Naive thymus-derived CD4-positive, alpha-beta T cell (primary cell): ENCODE measurements at regions of chr12 and their contacts with region 1.

Region 1: DNA sequence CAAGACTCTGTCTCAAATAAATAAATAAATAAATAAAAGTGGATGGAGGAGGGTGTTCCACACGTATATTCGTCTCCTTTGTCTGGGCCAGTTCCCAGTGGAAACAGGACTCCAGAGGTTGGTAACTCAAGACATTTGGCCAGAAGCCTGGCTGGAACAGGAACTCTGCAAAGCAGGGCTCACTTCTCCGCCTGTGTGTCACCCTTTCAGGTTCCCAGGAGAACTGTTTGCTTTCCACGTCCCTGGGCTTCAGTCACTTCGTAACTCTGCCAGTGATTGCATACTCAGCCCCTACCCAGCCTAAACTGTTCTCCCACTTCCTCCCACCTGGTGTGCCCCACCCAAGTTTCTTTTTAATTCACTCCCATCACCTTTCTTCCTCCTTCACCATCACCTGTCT is 7.0 kb upstream of the UBE2N start:
- DNase-seq: no peak
- ATAC-seq: no peak
- H3K4me3 ChIP-seq: no peak overlapping the region
- H3K4me3 Mint-ChIP-seq: peak overlapping the region in 9 of 10 donors; percentile 3 to 82 (median 52)
- H3K27ac ChIP-seq: peak overlapping the region; percentile 65
- H3K27ac Mint-ChIP-seq: peak overlapping the region in 8 of 9 donors; percentile 92 to 100 (median 97)
- H3K4me1 ChIP-seq: peaks cover 0 to 29% of the 10 kb centered on the region in 2 donors
- H3K4me1 Mint-ChIP-seq: peaks cover 14 to 32% (median 28%) of the 10 kb centered on the region in 7 donors
- H3K27me3 ChIP-seq: no peaks in the 10 kb centered on the region
- H3K27me3 Mint-ChIP-seq: no peaks in the 10 kb centered on the region

Region 2: DNA sequence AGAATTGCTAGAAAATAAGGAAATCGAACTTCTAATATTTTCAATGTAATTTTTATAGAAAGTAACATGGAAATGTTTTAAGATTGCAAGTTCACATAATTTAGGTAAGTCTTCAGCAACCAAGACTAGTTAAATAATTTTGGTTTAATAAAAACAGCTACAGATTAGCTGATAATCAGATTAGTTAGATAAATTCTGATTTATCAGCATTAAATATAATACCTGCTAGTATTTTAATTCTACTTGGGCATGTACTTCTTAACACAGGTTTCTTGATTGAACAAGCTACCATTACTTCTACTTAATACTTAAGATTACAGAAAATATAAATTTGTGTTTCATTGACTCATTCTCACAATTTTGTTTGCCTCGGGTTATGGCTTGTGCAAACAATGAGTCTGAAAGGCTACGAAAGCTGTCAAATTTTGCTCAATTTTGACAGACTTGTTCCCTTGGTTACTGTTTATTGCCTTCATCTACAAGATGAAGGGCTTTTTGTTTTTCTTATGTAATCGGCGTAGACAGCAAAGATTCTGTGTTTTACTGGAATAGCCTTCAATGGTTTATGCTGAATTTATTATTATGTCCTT is 187.2 kb before region 1 on chr12:
- CTCF ChIA-PET with region 1: no interaction called
- POLR2A ChIA-PET with region 1: no interaction called
- intact Hi-C with region 1: no loop called
- DNase-seq: no peak
- ATAC-seq: no peak
- H3K4me3 ChIP-seq: no peak overlapping the region
- H3K4me3 Mint-ChIP-seq: no peak overlapping the region
- H3K27ac ChIP-seq: no peak overlapping the region
- H3K27ac Mint-ChIP-seq: no peak overlapping the region
- H3K4me1 ChIP-seq: no peaks in the 10 kb centered on the region
- H3K4me1 Mint-ChIP-seq: no peaks in the 10 kb centered on the region
- H3K27me3 ChIP-seq: no peaks in the 10 kb centered on the region
- H3K27me3 Mint-ChIP-seq: peaks cover 0 to 4% (median 0%) of the 10 kb centered on the region in 5 donors

Region 3: GRCh38 chr12:93387780-93388179 is 61.0 kb before region 1 on chr12:
- CTCF ChIA-PET with region 1: no interaction called
- POLR2A ChIA-PET with region 1: no interaction called
- intact Hi-C with region 1: no loop called
- DNase-seq: no peak
- ATAC-seq: no peak
- H3K4me3 ChIP-seq: no peak overlapping the region
- H3K4me3 Mint-ChIP-seq: peak overlapping the region in 1 of 10 donors; percentile 32
- H3K27ac ChIP-seq: no peak overlapping the region
- H3K27ac Mint-ChIP-seq: peak overlapping the region in 1 of 9 donors; percentile 11
- H3K4me1 ChIP-seq: peaks cover 0 to 21% of the 10 kb centered on the region in 2 donors
- H3K4me1 Mint-ChIP-seq: peaks cover 22 to 81% (median 58%) of the 10 kb centered on the region in 7 donors
- H3K27me3 ChIP-seq: no peaks in the 10 kb centered on the region
- H3K27me3 Mint-ChIP-seq: no peaks in the 10 kb centered on the region

Region 4: DNA sequence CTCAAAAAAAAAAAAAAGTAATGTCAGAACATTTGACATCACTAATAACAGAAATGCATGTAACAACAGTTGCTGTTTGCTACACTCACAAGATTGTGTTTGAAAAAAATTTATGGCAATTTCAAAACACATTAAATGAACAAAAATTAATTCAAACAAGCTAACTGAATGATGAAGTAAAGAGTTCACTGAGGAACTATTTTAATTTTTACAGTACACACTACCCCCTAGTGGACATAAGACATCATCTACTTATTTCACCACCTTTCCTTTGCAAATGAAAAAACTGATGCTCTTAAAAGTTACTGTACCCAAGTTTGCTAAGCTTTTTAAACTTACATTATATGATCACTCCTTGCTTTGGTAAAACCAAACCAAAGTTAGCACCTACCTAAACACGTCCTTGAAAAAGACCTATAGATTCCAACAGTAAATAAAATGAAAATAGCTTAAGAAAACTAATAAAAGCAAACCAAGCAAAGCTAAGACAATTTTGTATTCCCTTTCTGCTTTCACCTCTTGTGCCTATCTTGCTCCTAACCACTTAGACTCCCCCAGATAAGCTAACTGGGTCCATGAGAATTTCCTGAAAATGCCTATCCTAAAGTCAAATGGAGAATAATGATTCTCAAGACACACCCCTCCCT is 29.3 kb before region 1 on chr12:
- CTCF ChIA-PET with region 1: no interaction called
- POLR2A ChIA-PET with region 1: no interaction called
- intact Hi-C with region 1: no loop called
- DNase-seq: peak in 6 of 9 donors; percentile 36 to 68 (median 54)
- ATAC-seq: peak; percentile 88
- H3K4me3 ChIP-seq: no peak overlapping the region
- H3K4me3 Mint-ChIP-seq: peak overlapping the region in 2 of 10 donors; percentile 10 to 34
- H3K27ac ChIP-seq: no peak overlapping the region
- H3K27ac Mint-ChIP-seq: peak overlapping the region in 8 of 9 donors; percentile 19 to 92 (median 54)
- H3K4me1 ChIP-seq: peaks cover 0 to 16% of the 10 kb centered on the region in 2 donors
- H3K4me1 Mint-ChIP-seq: peaks cover 45 to 95% (median 88%) of the 10 kb centered on the region in 7 donors
- H3K27me3 ChIP-seq: no peaks in the 10 kb centered on the region
- H3K27me3 Mint-ChIP-seq: no peaks in the 10 kb centered on the region

Region 5: DNA sequence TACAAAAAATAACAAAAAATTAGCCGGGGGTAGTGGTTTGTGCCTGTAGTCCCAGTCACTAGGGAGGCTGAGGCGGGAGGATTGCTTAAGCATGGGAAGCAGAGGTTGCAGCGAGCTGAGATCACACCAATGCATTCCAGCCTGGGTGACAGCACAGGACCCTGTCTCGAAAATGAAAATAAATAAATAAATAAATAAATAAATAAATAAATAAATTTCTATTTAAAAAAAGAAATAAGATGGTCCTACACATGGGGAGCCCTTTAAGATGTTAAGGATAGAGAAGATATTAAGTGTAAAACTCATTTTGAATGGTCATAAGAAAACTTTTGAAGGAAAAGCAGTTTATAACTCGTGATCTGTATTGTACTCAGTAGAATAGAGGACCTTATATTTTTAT is 10.3 kb after region 1 on chr12:
- CTCF ChIA-PET with region 1: no interaction called
- POLR2A ChIA-PET with region 1: interaction called, 4 read pairs
- intact Hi-C with region 1: loop called in 1 of 2 experiments (anchors 1 kb)
- DNase-seq: no peak
- ATAC-seq: no peak
- H3K4me3 ChIP-seq: no peak overlapping the region
- H3K4me3 Mint-ChIP-seq: no peak overlapping the region
- H3K27ac ChIP-seq: no peak overlapping the region
- H3K27ac Mint-ChIP-seq: no peak overlapping the region
- H3K4me1 ChIP-seq: no peaks in the 10 kb centered on the region
- H3K4me1 Mint-ChIP-seq: peaks cover 0 to 8% (median under 1%) of the 10 kb centered on the region in 7 donors
- H3K27me3 ChIP-seq: no peaks in the 10 kb centered on the region
- H3K27me3 Mint-ChIP-seq: peaks cover 0 to 12% (median 0%) of the 10 kb centered on the region in 5 donors

Region 6: GRCh38 chr12:93467351-93468007 is 18.7 kb after region 1 on chr12 and contains the start of gene MRPL42:
- CTCF ChIA-PET with region 1: interaction called, 8 read pairs
- POLR2A ChIA-PET with region 1: interaction called, 6 read pairs
- intact Hi-C with region 1: loop called in 1 of 2 experiments (anchors 1 kb)
- DNase-seq: peak; percentile 86 to 96 (median 94)
- ATAC-seq: peak; percentile 97
- H3K4me3 ChIP-seq: peak within 1 kb of the TSS; percentile 94
- H3K4me3 Mint-ChIP-seq: peak within 1 kb of the TSS; percentile 85 to 96 (median 93)
- H3K27ac ChIP-seq: peak within 1 kb of the TSS; percentile 85
- H3K27ac Mint-ChIP-seq: peak within 1 kb of the TSS; percentile 90 to 98 (median 95)
- H3K4me1 ChIP-seq: peaks cover 8 to 10% of the 10 kb centered on the region in 2 donors
- H3K4me1 Mint-ChIP-seq: peaks cover 28 to 48% (median 36%) of the 10 kb centered on the region in 7 donors
- H3K27me3 ChIP-seq: no peaks in the 10 kb centered on the region
- H3K27me3 Mint-ChIP-seq: no peaks in the 10 kb centered on the region
- total RNA-seq, gene MRPL42: 30.1 to 65.8 (median 45.6) TPM

Region 7: DNA sequence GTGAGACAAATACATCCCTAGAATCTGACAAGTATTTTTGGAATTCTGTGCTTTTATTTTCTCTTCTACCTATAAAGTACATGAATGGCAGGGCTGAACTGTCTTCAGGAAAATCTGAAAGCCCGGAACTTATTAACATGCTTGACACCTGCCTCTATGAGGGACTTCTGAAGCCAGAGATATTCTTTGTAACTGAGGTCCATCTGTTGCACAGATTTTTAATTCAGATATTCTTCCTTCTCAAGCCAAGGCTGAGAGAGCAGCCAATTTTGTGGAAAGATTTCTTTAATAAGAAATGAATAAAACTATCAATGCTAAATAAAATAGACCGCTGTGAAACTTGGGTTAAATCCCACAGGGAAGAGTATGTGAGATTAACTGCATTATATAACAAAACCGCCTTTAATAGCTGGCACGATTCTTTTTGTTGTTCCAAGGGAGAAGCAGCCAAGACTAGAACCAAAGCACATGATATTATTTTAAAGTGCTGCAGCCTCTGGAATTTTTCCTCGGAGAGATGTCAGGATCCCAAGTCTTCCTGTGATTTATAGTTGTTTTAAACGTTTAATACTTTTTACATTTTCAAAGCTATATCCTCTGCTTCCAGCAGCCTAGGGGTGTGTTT is 377.2 kb after region 1 on chr12:
- CTCF ChIA-PET with region 1: no interaction called
- POLR2A ChIA-PET with region 1: no interaction called
- intact Hi-C with region 1: no loop called
- DNase-seq: no peak
- ATAC-seq: no peak
- H3K4me3 ChIP-seq: no peak overlapping the region
- H3K4me3 Mint-ChIP-seq: no peak overlapping the region
- H3K27ac ChIP-seq: no peak overlapping the region
- H3K27ac Mint-ChIP-seq: peak overlapping the region in 1 of 9 donors; percentile 21
- H3K4me1 ChIP-seq: no peaks in the 10 kb centered on the region
- H3K4me1 Mint-ChIP-seq: peaks cover 0 to 8% (median 4%) of the 10 kb centered on the region in 7 donors
- H3K27me3 ChIP-seq: no peaks in the 10 kb centered on the region
- H3K27me3 Mint-ChIP-seq: no peaks in the 10 kb centered on the region